CD14-positive monocyte (primary cell): ENCODE measurements at regions of chr1 and their contacts with region 1.

Region 1: DNA sequence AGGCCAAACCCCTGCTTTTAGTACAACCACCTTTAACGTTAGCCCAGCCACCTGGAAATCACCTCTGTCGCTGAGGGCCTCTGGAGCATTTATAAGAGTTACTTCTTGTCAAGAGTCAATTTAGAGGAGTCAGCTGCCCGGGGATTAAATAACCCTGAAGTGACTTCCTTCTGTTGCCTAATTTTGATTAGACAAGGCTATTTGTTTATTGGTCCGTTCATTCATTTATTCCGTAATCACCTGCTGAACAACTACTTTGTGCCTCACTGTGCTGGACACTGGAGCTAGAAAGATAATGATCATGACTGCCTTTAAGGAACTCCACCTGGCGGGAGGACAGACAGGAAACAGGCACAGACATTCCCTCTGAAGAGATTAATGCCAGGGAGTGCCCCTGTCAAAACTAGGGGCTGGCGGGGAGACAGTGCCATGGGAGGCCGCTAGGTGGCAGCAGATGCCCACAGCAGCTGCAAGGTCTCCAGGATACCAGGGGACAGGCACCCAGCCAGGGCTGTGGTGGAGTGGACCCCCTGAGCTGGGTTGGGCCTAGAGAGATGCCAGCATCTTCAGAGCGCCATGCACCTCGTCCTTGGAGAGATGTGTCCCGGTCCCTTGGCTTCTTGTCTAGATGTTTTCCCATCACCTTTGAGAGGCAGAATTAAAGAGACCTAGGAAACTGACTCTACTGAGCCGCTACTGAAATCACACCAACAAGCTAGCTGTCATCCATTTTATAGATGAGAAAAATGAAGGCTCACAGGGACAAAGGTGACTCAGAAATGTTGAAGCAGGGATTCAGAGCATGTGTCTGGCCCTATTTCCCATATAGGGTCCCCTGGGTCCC is 3.7 kb downstream of the REN start:
- DNase-seq: peak; percentile 49 to 66 (median 63)
- H3K4me3 ChIP-seq: no peak overlapping the region
- H3K4me3 Mint-ChIP-seq: no peak overlapping the region
- H3K27ac ChIP-seq: no peak overlapping the region
- H3K27ac Mint-ChIP-seq: no peak overlapping the region
- H3K4me1 ChIP-seq: no peaks in the 10 kb centered on the region
- H3K4me1 Mint-ChIP-seq: peaks cover 3% of the 10 kb centered on the region
- H3K27me3 ChIP-seq: no peaks in the 10 kb centered on the region
- H3K27me3 Mint-ChIP-seq: peaks cover 3 to 13% (median 7%) of the 10 kb centered on the region in 3 donors
- CTCF ChIP-seq: peak; percentile 99

Region 2: DNA sequence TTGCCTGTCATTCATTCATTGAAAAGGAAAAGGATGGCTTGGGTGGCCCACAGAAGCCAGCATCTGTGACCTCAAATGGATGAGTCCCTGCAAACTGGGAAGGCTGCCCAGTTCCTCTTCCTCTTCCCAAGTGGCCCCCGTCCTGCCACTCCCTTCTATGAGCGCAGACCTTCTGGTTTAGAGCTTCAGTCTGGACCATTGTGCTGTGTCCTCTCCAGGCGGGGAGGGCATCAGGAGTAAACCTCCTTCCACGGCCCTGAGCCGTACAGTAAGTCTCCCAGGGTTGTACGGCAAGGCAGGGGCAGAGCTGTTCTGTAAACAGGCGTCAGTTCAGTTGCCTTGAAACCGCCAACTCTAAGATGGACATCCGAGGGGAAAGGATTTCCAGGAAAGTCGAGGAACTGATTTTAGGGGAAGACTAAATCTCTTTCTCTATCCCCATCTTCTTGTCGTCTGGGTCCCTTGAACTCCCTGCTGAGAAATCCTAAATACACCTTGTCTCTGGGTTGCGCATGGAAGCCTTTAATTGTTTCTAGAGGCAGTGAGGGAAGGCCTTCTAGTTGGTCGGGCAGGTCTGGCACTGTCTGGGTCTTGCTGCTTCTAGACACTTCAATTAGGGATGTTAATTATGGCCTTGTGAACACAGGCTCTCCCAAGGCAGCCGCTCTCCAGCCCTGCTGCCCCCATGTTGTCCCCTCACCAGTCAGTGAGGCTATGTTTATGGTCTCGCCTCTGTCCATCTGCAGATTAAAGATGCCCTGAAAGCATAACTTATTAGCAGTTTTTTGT is 67.4 kb before region 1 on chr1:
- intact Hi-C with region 1: no loop called
- DNase-seq: no peak
- H3K4me3 ChIP-seq: no peak overlapping the region
- H3K4me3 Mint-ChIP-seq: no peak overlapping the region
- H3K27ac ChIP-seq: no peak overlapping the region
- H3K27ac Mint-ChIP-seq: peak overlapping the region in 1 of 7 donors; percentile 8
- H3K4me1 ChIP-seq: no peaks in the 10 kb centered on the region
- H3K4me1 Mint-ChIP-seq: no peaks in the 10 kb centered on the region
- H3K27me3 ChIP-seq: no peaks in the 10 kb centered on the region
- H3K27me3 Mint-ChIP-seq: peaks cover 2 to 5% (median 3%) of the 10 kb centered on the region in 3 donors
- CTCF ChIP-seq: no peak

Region 3: GRCh38 chr1:204207136-204207616 is 44.7 kb after region 1 on chr1:
- intact Hi-C with region 1: loop called (anchors 2 kb)
- DNase-seq: peak; percentile 23 to 47 (median 34)
- H3K4me3 ChIP-seq: no peak overlapping the region
- H3K4me3 Mint-ChIP-seq: no peak overlapping the region
- H3K27ac ChIP-seq: no peak overlapping the region
- H3K27ac Mint-ChIP-seq: no peak overlapping the region
- H3K4me1 ChIP-seq: no peaks in the 10 kb centered on the region
- H3K4me1 Mint-ChIP-seq: no peaks in the 10 kb centered on the region
- H3K27me3 ChIP-seq: no peaks in the 10 kb centered on the region
- H3K27me3 Mint-ChIP-seq: peaks cover 9 to 24% (median 18%) of the 10 kb centered on the region in 3 donors
- CTCF ChIP-seq: peak; percentile 95